ENCODE measurements at regions of chr6 and their contacts with region 1.

Region 1: DNA sequence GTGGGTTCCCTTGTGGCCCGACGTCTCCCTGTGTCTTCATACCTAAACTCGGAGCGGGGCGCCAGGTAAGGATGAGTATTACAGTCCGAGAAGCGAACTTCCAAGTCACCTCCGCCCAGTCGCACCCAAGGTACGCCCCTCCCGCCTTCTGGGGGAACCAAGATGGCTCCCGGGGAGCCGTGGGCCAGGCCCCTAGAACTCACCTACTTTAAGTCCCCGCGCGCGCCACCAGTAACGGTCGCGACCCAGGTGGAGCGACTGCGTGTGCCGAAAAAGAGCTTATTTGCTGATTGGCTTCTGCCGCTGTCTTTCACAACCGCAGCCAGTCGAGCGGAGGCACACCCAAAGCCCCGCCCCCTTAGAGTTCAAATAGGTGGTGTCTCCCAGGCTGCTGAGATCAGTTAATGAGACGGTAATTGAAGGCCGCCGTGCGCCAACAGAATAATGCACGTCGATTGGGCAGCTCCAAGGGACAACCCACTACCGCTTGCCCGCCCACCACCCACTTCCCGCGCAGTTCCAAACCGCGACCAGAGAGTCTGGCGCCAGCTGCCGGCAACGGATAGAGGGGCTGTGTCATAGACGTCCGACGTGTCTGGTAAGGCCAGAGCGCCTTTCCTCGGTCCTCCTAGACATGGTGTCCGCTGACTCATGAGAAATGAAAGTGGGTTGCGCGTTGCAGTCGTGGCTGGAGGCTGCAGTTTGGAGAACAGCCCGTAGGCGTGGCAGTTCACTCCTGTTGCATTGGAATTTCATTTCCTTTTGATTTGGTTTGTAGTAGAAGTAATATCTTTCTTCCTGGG is at the start of gene MDC1:
- DNase-seq: peak; percentile 97 to 100
- ATAC-seq: peak; percentile 72 to 88 (median 77)
- H3K4me3 ChIP-seq: peak within 1 kb of the TSS; percentile 68
- H3K4me3 Mint-ChIP-seq: peak within 1 kb of the TSS; percentile 98
- H3K27ac ChIP-seq: peak within 1 kb of the TSS; percentile 95
- H3K27ac Mint-ChIP-seq: peak within 1 kb of the TSS; percentile 97 to 100
- H3K4me1 ChIP-seq: peaks cover 39% of the 10 kb centered on the region
- H3K4me1 Mint-ChIP-seq: peaks cover 60 to 62% of the 10 kb centered on the region in 2 donors
- H3K27me3 ChIP-seq: no peaks in the 10 kb centered on the region
- H3K27me3 Mint-ChIP-seq: no peaks in the 10 kb centered on the region
- CTCF ChIP-seq: no peak
- total RNA-seq, gene MDC1: 61.2 to 77.0 (median 64.5) TPM

Region 2: DNA sequence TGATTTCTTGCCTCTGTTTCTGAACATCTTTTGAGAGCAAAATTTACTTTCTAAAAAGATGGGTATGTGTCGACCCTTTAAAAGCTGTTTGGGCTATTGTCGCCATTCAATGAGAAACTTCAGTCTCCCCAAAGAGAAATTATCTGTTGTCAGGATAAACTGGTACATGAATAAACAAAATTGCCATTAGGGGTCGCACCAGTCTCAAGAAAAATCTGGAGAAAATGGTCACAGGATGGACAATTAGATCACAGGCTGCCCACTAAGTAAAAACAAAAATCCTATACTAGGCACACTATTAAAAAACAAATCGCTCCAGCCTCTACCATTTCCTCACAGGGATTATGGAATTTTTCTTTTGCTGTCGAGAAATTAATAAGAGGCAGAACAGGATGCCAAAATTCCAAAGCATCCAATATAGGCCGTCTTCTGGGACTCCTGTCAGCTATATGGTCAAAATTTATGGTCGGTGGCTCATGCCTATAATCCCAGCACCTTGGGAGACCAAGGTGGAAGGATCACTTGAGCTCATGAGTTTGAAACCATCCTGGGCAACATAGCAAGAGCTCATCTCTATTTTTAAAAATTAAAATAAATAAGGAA is 233.5 kb before region 1 on chr6:
- intact Hi-C with region 1: loop called (anchors 2 kb)
- DNase-seq: peak in 1 of 2 donors; percentile 79
- ATAC-seq: peak in 1 of 3 donors; percentile 27
- H3K4me3 ChIP-seq: no peak overlapping the region
- H3K4me3 Mint-ChIP-seq: no peak overlapping the region
- H3K27ac ChIP-seq: no peak overlapping the region
- H3K27ac Mint-ChIP-seq: no peak overlapping the region
- H3K4me1 ChIP-seq: peaks cover 25% of the 10 kb centered on the region
- H3K4me1 Mint-ChIP-seq: peaks cover 13 to 20% of the 10 kb centered on the region in 2 donors
- H3K27me3 ChIP-seq: peaks cover 35% of the 10 kb centered on the region
- H3K27me3 Mint-ChIP-seq: peaks cover 32 to 37% of the 10 kb centered on the region in 2 donors
- CTCF ChIP-seq: peak; percentile 76

Region 3: DNA sequence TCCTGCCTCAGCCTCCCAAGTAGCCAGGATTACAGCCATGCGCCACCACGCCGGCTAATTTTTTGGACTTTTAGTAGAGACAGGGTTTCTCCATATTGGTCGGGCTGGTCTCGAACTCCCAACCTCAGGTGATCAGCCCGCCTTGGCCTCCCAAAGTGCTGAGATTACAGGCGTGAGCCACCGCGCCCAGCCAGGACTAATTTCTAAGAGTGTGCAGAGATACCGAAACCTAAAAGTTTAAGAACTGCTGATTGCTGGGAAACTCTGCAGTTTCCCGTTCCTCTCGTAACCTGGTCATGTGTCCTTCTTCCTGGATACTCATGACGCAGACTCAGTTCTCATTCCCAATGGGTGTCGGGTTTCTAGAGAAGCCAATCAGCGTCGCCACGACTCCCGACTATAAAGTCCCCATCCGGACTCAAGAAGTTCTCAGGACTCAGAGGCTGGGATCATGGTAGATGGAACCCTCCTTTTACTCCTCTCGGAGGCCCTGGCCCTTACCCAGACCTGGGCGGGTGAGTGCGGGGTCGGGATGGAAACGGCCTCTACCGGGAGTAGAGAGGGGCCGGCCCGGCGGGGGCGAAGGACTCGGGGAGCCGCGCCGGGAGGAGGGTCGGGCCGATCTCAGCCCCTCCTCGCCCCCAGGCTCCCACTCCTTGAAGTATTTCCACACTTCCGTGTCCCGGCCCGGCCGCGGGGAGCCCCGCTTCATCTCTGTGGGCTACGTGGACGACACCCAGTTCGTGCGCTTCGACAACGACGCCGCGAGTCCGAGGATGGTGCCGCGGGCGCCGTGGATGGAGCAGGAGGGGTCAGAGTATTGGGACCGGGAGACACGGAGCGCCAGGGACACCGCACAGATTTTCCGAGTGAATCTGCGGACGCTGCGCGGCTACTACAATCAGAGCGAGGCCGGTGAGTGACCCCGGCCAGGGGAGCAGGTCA is 227.9 kb before region 1 on chr6 and contains the start of gene HLA-E:
- intact Hi-C with region 1: loop called (anchors 2 kb)
- DNase-seq: peak; percentile 79 to 99
- ATAC-seq: peak; percentile 83 to 90 (median 83)
- H3K4me3 ChIP-seq: peak within 1 kb of the TSS; percentile 100
- H3K4me3 Mint-ChIP-seq: peak within 1 kb of the TSS; percentile 97
- H3K27ac ChIP-seq: peak within 1 kb of the TSS; percentile 95
- H3K27ac Mint-ChIP-seq: peak within 1 kb of the TSS; percentile 96 to 97
- H3K4me1 ChIP-seq: peaks cover 48% of the 10 kb centered on the region
- H3K4me1 Mint-ChIP-seq: peaks cover 47 to 57% of the 10 kb centered on the region in 2 donors
- H3K27me3 ChIP-seq: no peaks in the 10 kb centered on the region
- H3K27me3 Mint-ChIP-seq: no peaks in the 10 kb centered on the region
- CTCF ChIP-seq: no peak
- total RNA-seq, gene HLA-E: 1,807 to 2,048 (median 1,904) TPM

Region 4: GRCh38 chr6:30556066-30556905 is 161.0 kb before region 1 on chr6 and contains the start of gene GNL1:
- intact Hi-C with region 1: loop called (anchors 1 kb)
- DNase-seq: peak; percentile 97 to 99
- ATAC-seq: peak; percentile 79 to 93 (median 80)
- H3K4me3 ChIP-seq: peak within 1 kb of the TSS; percentile 64
- H3K4me3 Mint-ChIP-seq: peak within 1 kb of the TSS; percentile 98
- H3K27ac ChIP-seq: peak within 1 kb of the TSS; percentile 97
- H3K27ac Mint-ChIP-seq: peak within 1 kb of the TSS; percentile 98 to 100
- H3K4me1 ChIP-seq: peaks cover 24% of the 10 kb centered on the region
- H3K4me1 Mint-ChIP-seq: peaks cover 35 to 54% of the 10 kb centered on the region in 2 donors
- H3K27me3 ChIP-seq: no peaks in the 10 kb centered on the region
- H3K27me3 Mint-ChIP-seq: no peaks in the 10 kb centered on the region
- CTCF ChIP-seq: no peak
- total RNA-seq, gene GNL1: 137 to 208 (median 187) TPM

Region 5: DNA sequence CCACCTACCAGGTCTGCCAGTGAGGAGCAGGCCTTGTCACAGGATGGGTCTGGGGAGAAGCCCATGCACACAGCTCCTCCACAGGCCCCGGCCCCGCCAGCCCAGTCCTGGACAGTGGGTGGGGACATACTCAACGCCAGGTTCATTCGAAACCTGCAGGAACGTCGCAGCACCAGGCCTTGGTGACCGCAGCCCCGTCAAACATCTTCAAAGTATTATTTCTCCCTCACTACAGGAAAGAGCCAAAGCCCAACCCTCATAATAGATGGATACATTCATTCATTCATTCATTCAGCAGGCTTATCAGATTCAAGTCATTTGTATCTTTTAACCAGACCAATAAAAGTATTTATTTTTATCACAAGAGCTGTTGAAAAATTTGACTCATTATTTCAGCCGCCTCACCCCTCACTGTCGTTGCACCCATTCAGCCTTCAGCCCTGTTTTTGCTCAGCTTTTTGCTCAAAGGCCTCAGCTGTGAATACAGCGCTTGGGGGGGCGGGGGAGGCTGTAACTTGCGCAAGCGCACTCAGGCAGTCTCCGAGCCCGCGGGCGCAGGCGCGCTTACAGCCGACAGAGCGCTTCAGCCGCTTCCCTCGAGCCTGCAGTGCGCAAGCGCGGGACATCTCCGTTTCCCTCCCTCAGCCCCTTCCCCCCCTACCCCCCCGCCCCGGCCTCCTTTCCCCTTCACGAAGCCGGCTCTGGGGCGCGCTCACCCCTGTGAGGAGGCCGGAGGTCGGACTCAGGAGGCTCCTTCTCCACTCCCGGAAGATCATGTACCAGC is 70.6 kb before region 1 on chr6 and contains the start of gene C6orf136:
- intact Hi-C with region 1: loop called (anchors 2 kb)
- DNase-seq: peak; percentile 85 to 99
- ATAC-seq: peak; percentile 77 to 87 (median 80)
- H3K4me3 ChIP-seq: peak within 1 kb of the TSS; percentile 96
- H3K4me3 Mint-ChIP-seq: peak within 1 kb of the TSS; percentile 86
- H3K27ac ChIP-seq: peak within 1 kb of the TSS; percentile 98
- H3K27ac Mint-ChIP-seq: peak within 1 kb of the TSS; percentile 82 to 83
- H3K4me1 ChIP-seq: peaks cover 16% of the 10 kb centered on the region
- H3K4me1 Mint-ChIP-seq: peaks cover 15 to 24% of the 10 kb centered on the region in 2 donors
- H3K27me3 ChIP-seq: no peaks in the 10 kb centered on the region
- H3K27me3 Mint-ChIP-seq: no peaks in the 10 kb centered on the region
- CTCF ChIP-seq: no peak
- total RNA-seq, gene C6orf136: 39.4 to 51.4 (median 50.9) TPM

Region 6: GRCh38 chr6:30678964-30679726 is 38.1 kb before region 1 on chr6:
- intact Hi-C with region 1: loop called (anchors 1 kb)
- DNase-seq: peak; percentile 94 to 95
- ATAC-seq: peak; percentile 35 to 69 (median 48)
- H3K4me3 ChIP-seq: peak overlapping the region; percentile 15
- H3K4me3 Mint-ChIP-seq: peak overlapping the region; percentile 79
- H3K27ac ChIP-seq: peak overlapping the region; percentile 59
- H3K27ac Mint-ChIP-seq: peak overlapping the region; percentile 91 to 98
- H3K4me1 ChIP-seq: peaks cover 47% of the 10 kb centered on the region
- H3K4me1 Mint-ChIP-seq: peaks cover 45 to 65% of the 10 kb centered on the region in 2 donors
- H3K27me3 ChIP-seq: no peaks in the 10 kb centered on the region
- H3K27me3 Mint-ChIP-seq: no peaks in the 10 kb centered on the region
- CTCF ChIP-seq: peak; percentile 95

Region 7: GRCh38 chr6:30686908-30687658 is 30.2 kb before region 1 on chr6:
- intact Hi-C with region 1: loop called (anchors 1 kb)
- DNase-seq: peak; percentile 64 to 78
- ATAC-seq: peak; percentile 25 to 45 (median 30)
- H3K4me3 ChIP-seq: peak overlapping the region; percentile 96
- H3K4me3 Mint-ChIP-seq: peak overlapping the region; percentile 96
- H3K27ac ChIP-seq: peak overlapping the region; percentile 96
- H3K27ac Mint-ChIP-seq: peak overlapping the region; percentile 91 to 98
- H3K4me1 ChIP-seq: peaks cover 68% of the 10 kb centered on the region
- H3K4me1 Mint-ChIP-seq: peaks cover 63 to 80% of the 10 kb centered on the region in 2 donors
- H3K27me3 ChIP-seq: no peaks in the 10 kb centered on the region
- H3K27me3 Mint-ChIP-seq: no peaks in the 10 kb centered on the region
- CTCF ChIP-seq: no peak

Region 8: GRCh38 chr6:30759575-30760239 is 42.5 kb after region 1 on chr6:
- intact Hi-C with region 1: no loop called
- DNase-seq: no peak
- ATAC-seq: no peak
- H3K4me3 ChIP-seq: no peak overlapping the region
- H3K4me3 Mint-ChIP-seq: no peak overlapping the region
- H3K27ac ChIP-seq: no peak overlapping the region
- H3K27ac Mint-ChIP-seq: no peak overlapping the region
- H3K4me1 ChIP-seq: no peaks in the 10 kb centered on the region
- H3K4me1 Mint-ChIP-seq: peaks cover 6 to 10% of the 10 kb centered on the region in 2 donors
- H3K27me3 ChIP-seq: no peaks in the 10 kb centered on the region
- H3K27me3 Mint-ChIP-seq: peaks cover 15 to 20% of the 10 kb centered on the region in 2 donors
- CTCF ChIP-seq: no peak